Activated CD4-positive, alpha-beta memory T cell treated with anti-CD3 and anti-CD28 coated beads for 36 hours (primary cell): ENCODE measurements at regions of chr10 and their contacts with region 1.

Region 1: GRCh38 chr10:49187950-49188761 is at the start of gene TMEM273:
- DNase-seq: peak; percentile 73
- H3K4me3 Mint-ChIP-seq: peak within 1 kb of the TSS; percentile 76
- H3K27ac Mint-ChIP-seq: peak within 1 kb of the TSS; percentile 86
- H3K4me1 Mint-ChIP-seq: peaks cover 38% of the 10 kb centered on the region
- H3K27me3 Mint-ChIP-seq: peaks cover 17% of the 10 kb centered on the region
- total RNA-seq, gene TMEM273: 106 to 108 TPM

Region 2: DNA sequence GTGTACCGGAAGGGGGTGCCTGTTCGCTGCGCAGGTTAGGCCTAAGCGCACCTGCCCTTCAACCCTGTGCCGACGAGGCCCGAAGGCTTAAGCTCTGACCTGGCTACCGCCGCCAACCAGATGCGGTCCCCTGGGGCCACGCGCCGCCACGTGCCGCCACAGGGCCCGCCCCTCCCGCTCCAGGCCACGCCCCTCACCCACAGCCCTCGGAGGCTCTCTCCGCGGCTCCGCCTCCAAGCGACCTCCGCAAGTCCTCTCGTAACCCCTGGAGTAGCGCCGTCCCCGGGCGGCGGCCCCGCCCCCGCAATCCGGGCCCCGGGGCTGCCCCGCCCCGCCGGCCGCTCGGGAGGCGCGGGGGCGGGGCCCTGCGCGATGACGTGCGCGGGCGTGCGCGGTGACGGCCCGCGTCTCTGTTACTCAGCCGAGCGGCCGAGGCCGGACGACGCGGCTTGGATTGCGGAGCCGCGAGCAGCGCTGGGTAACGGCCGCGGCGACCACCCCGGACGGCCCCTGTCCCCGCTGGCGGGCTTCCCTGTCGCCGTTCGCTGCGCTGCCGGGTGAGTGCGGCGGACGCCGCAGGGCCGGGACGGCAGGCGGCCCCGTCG is 881.8 kb before region 1 on chr10 and contains the start of gene MAPK8:
- CTCF ChIA-PET with region 1: no interaction called
- POLR2A ChIA-PET with region 1: no interaction called
- intact Hi-C with region 1: loop called (anchors 5 kb)
- DNase-seq: peak; percentile 92
- H3K4me3 Mint-ChIP-seq: peak within 1 kb of the TSS; percentile 84
- H3K27ac Mint-ChIP-seq: peak within 1 kb of the TSS; percentile 58
- H3K4me1 Mint-ChIP-seq: peaks cover 34% of the 10 kb centered on the region
- H3K27me3 Mint-ChIP-seq: no peaks in the 10 kb centered on the region
- total RNA-seq, gene MAPK8: 44.2 to 45.4 TPM

Region 3: GRCh38 chr10:49177391-49178355 is 10.5 kb before region 1 on chr10:
- CTCF ChIA-PET with region 1: no interaction called
- POLR2A ChIA-PET with region 1: interaction called, 77 read pairs
- intact Hi-C with region 1: no loop called
- DNase-seq: peak; percentile 89
- H3K4me3 Mint-ChIP-seq: peak overlapping the region; percentile 63
- H3K27ac Mint-ChIP-seq: peak overlapping the region; percentile 94
- H3K4me1 Mint-ChIP-seq: peaks cover 71% of the 10 kb centered on the region
- H3K27me3 Mint-ChIP-seq: no peaks in the 10 kb centered on the region

Region 4: GRCh38 chr10:49207113-49207512 is 19.0 kb after region 1 on chr10:
- CTCF ChIA-PET with region 1: no interaction called
- POLR2A ChIA-PET with region 1: no interaction called
- intact Hi-C with region 1: no loop called
- DNase-seq: no peak
- H3K4me3 Mint-ChIP-seq: no peak overlapping the region
- H3K27ac Mint-ChIP-seq: no peak overlapping the region
- H3K4me1 Mint-ChIP-seq: peaks cover 3% of the 10 kb centered on the region
- H3K27me3 Mint-ChIP-seq: peaks cover 8% of the 10 kb centered on the region

Region 5: GRCh38 chr10:49309626-49310411 is 121.7 kb after region 1 on chr10:
- CTCF ChIA-PET with region 1: no interaction called
- POLR2A ChIA-PET with region 1: no interaction called
- intact Hi-C with region 1: loop called (anchors 1 kb)
- DNase-seq: peak; percentile 47
- H3K4me3 Mint-ChIP-seq: no peak overlapping the region
- H3K27ac Mint-ChIP-seq: peak overlapping the region; percentile 1
- H3K4me1 Mint-ChIP-seq: peaks cover 21% of the 10 kb centered on the region
- H3K27me3 Mint-ChIP-seq: peaks cover 2% of the 10 kb centered on the region

Region 6: DNA sequence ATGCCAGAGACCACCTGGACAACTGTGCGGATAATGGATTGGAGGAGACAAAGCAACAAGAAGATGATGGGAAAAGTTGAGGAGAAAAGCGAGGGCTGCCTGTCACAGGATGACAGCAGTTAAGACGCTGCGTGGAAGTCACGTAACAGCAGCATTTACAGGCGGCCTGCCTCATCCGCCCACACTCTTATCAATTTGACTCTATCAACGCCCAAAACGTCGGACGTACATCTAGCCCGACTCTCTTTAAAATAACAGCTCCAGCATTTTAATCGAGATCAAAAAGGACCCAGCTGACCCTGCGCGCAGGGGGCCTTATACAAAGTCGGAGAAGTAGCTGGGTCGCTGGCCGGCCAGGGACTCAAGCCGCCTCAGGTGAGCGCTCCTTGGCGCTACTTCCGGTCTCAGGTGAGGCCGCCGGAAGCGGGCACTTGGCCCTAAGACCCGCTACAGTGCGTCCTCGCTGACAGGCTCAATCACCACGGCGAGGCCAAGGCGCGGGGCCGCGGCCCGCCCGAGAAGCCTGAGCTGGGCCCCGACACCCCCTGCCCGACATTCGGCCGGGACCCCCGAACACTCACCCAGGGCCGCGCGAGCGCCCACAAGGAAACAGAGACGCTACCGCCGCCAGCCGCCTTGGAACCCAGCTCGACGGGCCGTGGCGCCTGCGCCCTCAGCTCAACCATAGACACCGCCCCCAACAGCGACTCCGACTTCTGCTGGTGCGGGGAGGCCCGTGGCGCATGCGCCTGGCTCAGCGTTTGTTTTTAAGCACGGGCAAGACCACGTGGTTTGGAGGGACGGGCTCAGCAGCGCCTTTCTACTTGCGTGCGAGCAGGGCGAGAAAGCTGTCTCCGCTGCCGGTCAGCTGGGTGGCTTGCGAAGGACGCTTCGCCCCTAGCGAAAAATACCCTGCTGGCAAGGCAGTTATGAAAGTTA is 350.5 kb after region 1 on chr10 and contains the start of gene ERCC6:
- CTCF ChIA-PET with region 1: interaction called, 3 read pairs
- POLR2A ChIA-PET with region 1: interaction called, 3 read pairs
- intact Hi-C with region 1: loop called (anchors 5 kb)
- DNase-seq: peak; percentile 98
- H3K4me3 Mint-ChIP-seq: peak within 1 kb of the TSS; percentile 89
- H3K27ac Mint-ChIP-seq: peak within 1 kb of the TSS; percentile 95
- H3K4me1 Mint-ChIP-seq: peaks cover 34% of the 10 kb centered on the region
- H3K27me3 Mint-ChIP-seq: peaks cover 24% of the 10 kb centered on the region
- total RNA-seq, gene ERCC6: 17.5 to 18.8 TPM

Region 7: GRCh38 chr10:49552249-49552672 is 364.1 kb after region 1 on chr10:
- CTCF ChIA-PET with region 1: no interaction called
- POLR2A ChIA-PET with region 1: no interaction called
- intact Hi-C with region 1: no loop called
- DNase-seq: no peak
- H3K4me3 Mint-ChIP-seq: no peak overlapping the region
- H3K27ac Mint-ChIP-seq: no peak overlapping the region
- H3K4me1 Mint-ChIP-seq: no peaks in the 10 kb centered on the region
- H3K27me3 Mint-ChIP-seq: peaks cover 29% of the 10 kb centered on the region